H1 (cell line): ENCODE measurements at regions of chr2 and their contacts with region 1.

Region 1: DNA sequence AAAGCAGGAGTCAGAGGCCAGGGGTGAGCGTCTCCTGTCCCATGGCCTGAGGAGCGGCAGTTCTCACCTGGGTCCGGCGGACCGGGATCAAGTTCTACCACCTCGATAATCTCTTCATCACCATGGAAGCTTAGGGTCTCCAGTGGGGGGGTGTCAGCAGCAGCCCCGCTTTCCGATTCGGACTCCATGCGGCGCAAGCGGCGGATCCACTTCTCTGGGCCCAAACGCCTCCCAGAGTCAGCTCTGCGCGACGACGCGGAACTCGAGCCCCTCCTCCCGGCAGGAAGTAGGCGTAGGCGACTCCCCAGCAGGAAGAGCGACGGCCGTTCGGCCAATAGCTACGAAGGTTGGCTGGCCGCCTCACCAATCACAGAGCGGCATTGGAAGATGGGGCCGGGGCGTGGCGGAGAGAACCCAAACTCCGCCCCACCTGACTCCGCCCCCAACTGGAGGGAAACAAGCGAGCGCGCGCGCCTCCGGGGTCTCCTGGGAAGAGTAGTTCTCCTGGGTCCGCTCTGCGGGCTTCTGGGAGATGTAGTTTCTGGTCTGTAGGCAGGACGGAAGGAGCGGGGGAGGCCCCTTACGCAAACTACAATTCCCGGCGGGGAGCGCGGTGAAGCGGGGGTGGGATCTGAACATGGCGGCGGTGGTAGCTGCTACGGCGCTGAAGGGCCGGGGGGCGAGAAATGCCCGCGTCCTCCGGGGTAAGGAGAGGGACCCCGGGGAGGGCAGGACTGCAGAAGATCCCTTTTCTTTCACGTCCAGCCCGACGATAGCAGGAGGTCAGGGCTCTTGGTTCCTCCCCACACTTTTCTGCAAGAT is at the starts of genes AAMP and PNKD:
- DNase-seq: peak; percentile 97 to 100
- H3K4me3 ChIP-seq: peak within 1 kb of the TSS; percentile 89 to 95 (median 92)
- H3K27ac ChIP-seq: peak within 1 kb of the TSS; percentile 28; the same call in 1 of the 2 replicates
- H3K4me1 ChIP-seq: peaks cover 0 to 7% (median 4%) of the 10 kb centered on the region in 4 experiments; a peak in 4 of 7 replicates
- H3K27me3 ChIP-seq: no peaks in the 10 kb centered on the region
- CTCF ChIP-seq: no peak
- EP300 ChIP-seq: no peak
- POLR2A ChIP-seq: peak in 1 of 2 experiments; percentile 82; a peak in 2 of 3 replicates
- RAD21 ChIP-seq: no peak
- total RNA-seq, gene AAMP: 119 and 125 TPM in 2 replicates
- total RNA-seq, gene PNKD: 43.9 and 44.4 TPM in 2 replicates

Region 2: GRCh38 chr2:218257390-218257981 is 12.6 kb before region 1 on chr2:
- CTCF ChIA-PET with region 1: interaction called, 81 read pairs
- POLR2A ChIA-PET with region 1: interaction called, 29 read pairs
- DNase-seq: peak in 1 of 2 experiments; percentile 94
- H3K4me3 ChIP-seq: no peak overlapping the region
- H3K27ac ChIP-seq: no peak overlapping the region
- H3K4me1 ChIP-seq: peaks cover 3 to 21% (median 15%) of the 10 kb centered on the region in 4 experiments
- H3K27me3 ChIP-seq: no peaks in the 10 kb centered on the region
- CTCF ChIP-seq: peak in 2 of 3 experiments; percentile 76; a peak in 3 of 4 replicates
- EP300 ChIP-seq: no peak
- POLR2A ChIP-seq: no peak
- RAD21 ChIP-seq: peak; percentile 51 to 60

Region 3: GRCh38 chr2:218286570-218287459 is 16.7 kb after region 1 on chr2:
- CTCF ChIA-PET with region 1: interaction called, 131 read pairs
- POLR2A ChIA-PET with region 1: interaction called, 22 read pairs
- DNase-seq: peak; percentile 46 to 77
- H3K4me3 ChIP-seq: no peak overlapping the region
- H3K27ac ChIP-seq: no peak overlapping the region
- H3K4me1 ChIP-seq: peaks cover 5 to 11% (median 7%) of the 10 kb centered on the region in 4 experiments; a peak in 4 of 7 replicates
- H3K27me3 ChIP-seq: no peaks in the 10 kb centered on the region
- CTCF ChIP-seq: no peak
- EP300 ChIP-seq: no peak
- POLR2A ChIP-seq: no peak
- RAD21 ChIP-seq: no peak

Region 4: GRCh38 chr2:218292048-218293014 is 22.2 kb after region 1 on chr2 and contains the start of gene TMBIM1:
- CTCF ChIA-PET with region 1: interaction called, 131 read pairs
- POLR2A ChIA-PET with region 1: interaction called, 22 read pairs
- DNase-seq: peak in 1 of 2 experiments; percentile 88
- H3K4me3 ChIP-seq: peak within 1 kb of the TSS; percentile 51 to 66 (median 64)
- H3K27ac ChIP-seq: no peak within 1 kb of the TSS
- H3K4me1 ChIP-seq: peaks cover 0 to 9% (median 4%) of the 10 kb centered on the region in 4 experiments; a peak in 6 of 7 replicates
- H3K27me3 ChIP-seq: no peaks in the 10 kb centered on the region
- CTCF ChIP-seq: peak; percentile 64 to 87 (median 73)
- EP300 ChIP-seq: no peak
- POLR2A ChIP-seq: no peak
- RAD21 ChIP-seq: peak; percentile 34 to 66; a peak in 3 of 4 replicates
- total RNA-seq, gene TMBIM1: 22.1 and 24.5 TPM in 2 replicates

Region 5: GRCh38 chr2:218395797-218396687 is 125.9 kb after region 1 on chr2:
- CTCF ChIA-PET with region 1: interaction called, 68 read pairs
- POLR2A ChIA-PET with region 1: interaction called, 6 read pairs
- DNase-seq: peak; percentile 71 to 96
- H3K4me3 ChIP-seq: peak overlapping the region; percentile 49 to 77 (median 64)
- H3K27ac ChIP-seq: peak overlapping the region; percentile 94
- H3K4me1 ChIP-seq: peaks cover 0 to 39% (median 25%) of the 10 kb centered on the region in 4 experiments; a peak in 6 of 7 replicates
- H3K27me3 ChIP-seq: peaks cover 22 to 34% (median 31%) of the 10 kb centered on the region in 4 experiments
- CTCF ChIP-seq: peak in 2 of 3 experiments; percentile 70 to 75; a peak in 3 of 4 replicates
- EP300 ChIP-seq: 0 out of 3 replicates have a peak, but pooled peaks of 1 of the 2 experiments have one; percentile 69
- POLR2A ChIP-seq: no peak; a peak in 1 of 3 replicates
- RAD21 ChIP-seq: peak; percentile 60 to 69

Region 6: DNA sequence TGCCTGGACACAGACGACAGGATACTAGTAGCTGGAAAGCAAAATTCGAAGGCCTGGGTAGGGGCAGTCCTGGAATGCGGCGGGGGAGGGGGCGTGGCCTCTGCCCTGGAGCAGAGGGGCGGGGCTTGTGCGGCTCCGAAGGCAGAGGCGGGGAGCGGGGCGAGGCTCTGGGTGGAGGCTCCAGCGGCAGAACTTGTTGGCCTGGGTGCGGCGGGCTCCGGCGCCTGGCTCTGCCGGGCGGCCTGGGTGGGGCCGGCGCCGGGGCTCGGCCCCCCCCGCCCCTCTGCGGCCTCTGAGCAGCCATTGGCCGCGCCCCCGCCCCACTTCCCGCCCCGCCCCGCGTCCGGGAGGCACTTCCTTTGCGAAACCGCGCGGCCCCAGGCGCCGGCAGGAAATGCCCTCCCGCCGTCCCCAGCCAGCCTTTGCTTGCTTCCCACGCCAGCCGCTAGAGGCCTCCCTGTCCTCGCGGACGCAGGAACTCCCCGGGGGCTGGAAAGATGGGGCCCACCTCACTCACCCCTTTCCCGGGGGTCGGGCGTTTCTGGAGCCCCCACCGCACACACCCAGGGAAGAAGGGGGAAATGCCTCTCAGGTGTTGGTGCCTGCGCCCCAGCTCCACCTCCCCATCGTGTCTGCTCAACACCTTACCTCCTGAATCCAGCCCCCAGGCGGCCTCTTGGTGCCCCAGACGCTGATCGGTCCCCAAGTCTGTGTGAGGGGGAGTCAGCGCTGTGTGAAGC is 136.3 kb after region 1 on chr2:
- CTCF ChIA-PET with region 1: interaction called, 4 read pairs
- POLR2A ChIA-PET with region 1: interaction called, 16 read pairs
- DNase-seq: peak; percentile 85 to 98
- H3K4me3 ChIP-seq: peak overlapping the region; percentile 45 to 75 (median 62)
- H3K27ac ChIP-seq: peak overlapping the region; percentile 82; the same call in 1 of the 2 replicates
- H3K4me1 ChIP-seq: peaks cover 12 to 25% (median 19%) of the 10 kb centered on the region in 4 experiments
- H3K27me3 ChIP-seq: no peaks in the 10 kb centered on the region
- CTCF ChIP-seq: peak in 2 of 3 experiments; percentile 73 to 78; a peak in 3 of 4 replicates
- EP300 ChIP-seq: no peak
- POLR2A ChIP-seq: no peak
- RAD21 ChIP-seq: peak; percentile 80